Sigmoid colon (tissue), 7 donors: ENCODE measurements at regions of chr16 and their contacts with region 1.

Region 1: DNA sequence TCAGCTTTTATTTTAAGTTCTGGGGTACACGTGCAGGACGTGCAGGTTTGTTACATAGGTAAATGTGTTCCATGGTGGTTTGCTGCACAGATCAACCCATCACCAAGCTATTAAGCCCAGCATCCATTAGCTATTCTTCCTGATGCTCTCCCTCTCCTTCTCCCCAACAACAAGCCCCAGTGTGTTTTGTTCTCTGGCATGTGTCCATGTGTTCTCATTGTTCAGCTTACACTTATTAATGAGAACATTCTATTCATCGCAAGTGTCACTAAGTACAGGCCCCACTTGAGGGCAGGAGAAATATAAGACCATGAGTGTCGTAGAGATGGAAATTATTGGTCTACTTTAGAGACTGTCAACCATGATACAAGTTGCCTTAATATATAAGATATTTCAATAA is 615.1 kb downstream of the CDH8 start:
- DNase-seq: no peak
- H3K4me3 ChIP-seq: no peak overlapping the region
- H3K27ac ChIP-seq: no peak overlapping the region
- H3K4me1 ChIP-seq: no peaks in the 10 kb centered on the region
- H3K27me3 ChIP-seq: no peaks in the 10 kb centered on the region
- CTCF ChIP-seq: no peak
- EP300 ChIP-seq: no peak
- POLR2A ChIP-seq: no peak

Region 2: GRCh38 chr16:61836804-61837393 is 415.8 kb after region 1 on chr16:
- intact Hi-C with region 1: loop called (anchors 10 kb)
- DNase-seq: no peak
- H3K4me3 ChIP-seq: no peak overlapping the region
- H3K27ac ChIP-seq: no peak overlapping the region
- H3K4me1 ChIP-seq: no peaks in the 10 kb centered on the region
- H3K27me3 ChIP-seq: no peaks in the 10 kb centered on the region
- CTCF ChIP-seq: no peak
- EP300 ChIP-seq: no peak
- POLR2A ChIP-seq: no peak